Natural killer cell (primary cell): ENCODE measurements at regions of chr2 and their contacts with region 1.

Region 1: GRCh38 chr2:131673392-131674173 is 145.9 kb downstream of the CCDC74A start:
- DNase-seq: peak; percentile 57 to 72
- ATAC-seq: peak; percentile 73 to 85 (median 76)
- H3K4me3 ChIP-seq: no peak overlapping the region
- H3K4me3 Mint-ChIP-seq: peak overlapping the region; percentile 42
- H3K27ac ChIP-seq: no peak overlapping the region
- H3K27ac Mint-ChIP-seq: no peak overlapping the region
- H3K4me1 ChIP-seq: peaks cover 21% of the 10 kb centered on the region
- H3K4me1 Mint-ChIP-seq: peaks cover 6 to 10% of the 10 kb centered on the region in 2 donors
- H3K27me3 ChIP-seq: peaks cover 23% of the 10 kb centered on the region
- H3K27me3 Mint-ChIP-seq: peaks cover 23 to 33% of the 10 kb centered on the region in 2 donors
- CTCF ChIP-seq: peak; percentile 83

Region 2: DNA sequence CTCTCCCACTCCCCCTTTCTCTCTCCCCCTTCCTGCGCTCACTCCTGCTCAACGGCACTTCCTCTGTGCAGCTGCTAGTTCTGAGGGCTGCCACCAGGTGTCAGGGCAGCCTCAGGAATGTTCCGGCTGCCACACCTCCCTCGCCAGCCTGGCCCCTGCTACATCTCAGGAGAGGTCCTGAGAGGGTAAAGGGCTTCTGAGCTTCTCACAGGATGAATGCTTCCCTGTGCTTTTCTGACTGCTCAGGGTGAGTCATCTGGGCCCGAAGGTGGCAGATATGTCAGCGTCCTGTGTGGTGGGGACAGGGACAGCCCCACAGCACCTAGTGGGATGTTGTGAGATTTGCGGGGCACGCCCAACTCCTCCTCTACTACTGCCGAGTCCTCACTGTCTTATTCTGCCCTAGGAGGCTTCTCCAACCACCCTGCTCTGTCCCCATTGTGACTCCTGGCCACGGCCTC is 519.5 kb before region 1 on chr2:
- intact Hi-C with region 1: loop called (anchors 10 kb)
- DNase-seq: peak; percentile 41 to 82
- ATAC-seq: peak; percentile 77 to 91 (median 89)
- H3K4me3 ChIP-seq: no peak overlapping the region
- H3K4me3 Mint-ChIP-seq: no peak overlapping the region
- H3K27ac ChIP-seq: no peak overlapping the region
- H3K27ac Mint-ChIP-seq: peak overlapping the region in 1 of 2 donors; percentile 62
- H3K4me1 ChIP-seq: peaks cover 20% of the 10 kb centered on the region
- H3K4me1 Mint-ChIP-seq: peaks cover 0 to 19% of the 10 kb centered on the region in 2 donors
- H3K27me3 ChIP-seq: no peaks in the 10 kb centered on the region
- H3K27me3 Mint-ChIP-seq: no peaks in the 10 kb centered on the region
- CTCF ChIP-seq: peak; percentile 78

Region 3: GRCh38 chr2:131413148-131413747 is 260.3 kb before region 1 on chr2:
- intact Hi-C with region 1: loop called (anchors 2 kb)
- DNase-seq: peak in 1 of 2 donors; percentile 68
- ATAC-seq: peak; percentile 58 to 73 (median 71)
- H3K4me3 ChIP-seq: no peak overlapping the region
- H3K4me3 Mint-ChIP-seq: no peak overlapping the region
- H3K27ac ChIP-seq: no peak overlapping the region
- H3K27ac Mint-ChIP-seq: no peak overlapping the region
- H3K4me1 ChIP-seq: no peaks in the 10 kb centered on the region
- H3K4me1 Mint-ChIP-seq: peaks cover 0 to 5% of the 10 kb centered on the region in 2 donors
- H3K27me3 ChIP-seq: no peaks in the 10 kb centered on the region
- H3K27me3 Mint-ChIP-seq: peaks cover 22 to 40% of the 10 kb centered on the region in 2 donors
- CTCF ChIP-seq: peak; percentile 87

Region 4: DNA sequence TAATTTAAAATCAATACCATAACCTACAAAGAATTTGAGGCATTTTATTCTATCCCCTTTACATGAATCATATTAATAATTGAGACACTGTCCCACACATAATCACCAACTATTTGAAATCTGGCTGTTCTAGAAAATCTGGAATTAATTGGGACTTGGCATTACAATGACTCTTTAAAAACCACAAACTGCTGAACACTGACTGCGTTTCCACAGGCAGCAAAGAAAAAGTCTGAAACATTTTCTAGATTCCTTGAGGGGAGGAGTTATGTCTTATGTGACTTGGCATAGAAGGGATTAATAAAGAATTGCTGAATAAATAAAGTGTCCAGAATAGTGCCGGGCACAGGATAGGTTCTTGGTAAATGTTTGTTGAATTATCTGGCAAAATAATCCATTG is 804.4 kb after region 1 on chr2:
- intact Hi-C with region 1: no loop called
- DNase-seq: no peak
- ATAC-seq: no peak
- H3K4me3 ChIP-seq: no peak overlapping the region
- H3K4me3 Mint-ChIP-seq: no peak overlapping the region
- H3K27ac ChIP-seq: no peak overlapping the region
- H3K27ac Mint-ChIP-seq: no peak overlapping the region
- H3K4me1 ChIP-seq: no peaks in the 10 kb centered on the region
- H3K4me1 Mint-ChIP-seq: no peaks in the 10 kb centered on the region
- H3K27me3 ChIP-seq: no peaks in the 10 kb centered on the region
- H3K27me3 Mint-ChIP-seq: no peaks in the 10 kb centered on the region
- CTCF ChIP-seq: no peak